Dendritic cell treated with granulocyte-macrophage colony-stimulating factor and Interleukin-4, amounts not matched to agents 40 ng/mL and 50 ng/mL, for 4 days (primary cell): ENCODE measurements at regions of chr12 and their contacts with region 1.

Region 1: GRCh38 chr12:55073043-55074022 is 52.9 kb upstream of the OR9K2 start:
- H3K4me3 Mint-ChIP-seq: no peak overlapping the region
- H3K27ac Mint-ChIP-seq: no peak overlapping the region
- H3K4me1 Mint-ChIP-seq: no peaks in the 10 kb centered on the region
- H3K27me3 Mint-ChIP-seq: peaks cover 9% of the 10 kb centered on the region

Region 2: GRCh38 chr12:54701940-54702592 is 371.3 kb before region 1 on chr12:
- intact Hi-C with region 1: loop called (anchors 2 kb)
- H3K4me3 Mint-ChIP-seq: no peak overlapping the region
- H3K27ac Mint-ChIP-seq: no peak overlapping the region
- H3K4me1 Mint-ChIP-seq: peaks cover 13% of the 10 kb centered on the region
- H3K27me3 Mint-ChIP-seq: peaks cover 2% of the 10 kb centered on the region

Region 3: DNA sequence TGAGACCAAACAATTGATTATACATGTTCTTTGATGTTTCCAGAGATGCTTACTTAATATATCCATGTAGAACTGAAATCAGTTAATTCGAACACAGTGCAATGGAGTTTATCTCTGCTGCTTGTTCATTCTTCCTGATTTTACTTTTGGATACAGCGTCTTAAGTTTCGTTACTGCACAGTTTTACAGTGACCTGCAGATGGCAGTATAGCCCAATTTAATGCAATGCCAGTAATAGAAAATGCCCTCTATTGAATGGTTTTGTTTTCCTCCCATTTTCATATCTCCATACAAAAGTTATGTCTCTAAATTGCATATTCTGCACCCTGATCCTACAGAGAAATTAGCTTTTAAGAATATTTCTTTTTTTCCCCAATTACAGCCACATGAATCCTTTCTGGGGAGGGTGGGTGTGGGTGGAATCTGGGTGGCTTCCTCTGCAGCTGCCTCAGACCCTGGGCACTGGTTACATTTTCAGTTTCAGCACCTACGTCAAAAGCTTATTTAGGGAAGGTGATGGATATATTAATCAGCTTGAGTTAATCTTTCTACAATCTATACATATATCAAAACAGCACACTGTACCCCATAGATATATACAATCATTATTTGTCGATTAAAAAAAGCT is 324.0 kb before region 1 on chr12:
- intact Hi-C with region 1: loop called (anchors 2 kb)
- H3K4me3 Mint-ChIP-seq: no peak overlapping the region
- H3K27ac Mint-ChIP-seq: no peak overlapping the region
- H3K4me1 Mint-ChIP-seq: peaks cover 9% of the 10 kb centered on the region
- H3K27me3 Mint-ChIP-seq: no peaks in the 10 kb centered on the region

Region 4: DNA sequence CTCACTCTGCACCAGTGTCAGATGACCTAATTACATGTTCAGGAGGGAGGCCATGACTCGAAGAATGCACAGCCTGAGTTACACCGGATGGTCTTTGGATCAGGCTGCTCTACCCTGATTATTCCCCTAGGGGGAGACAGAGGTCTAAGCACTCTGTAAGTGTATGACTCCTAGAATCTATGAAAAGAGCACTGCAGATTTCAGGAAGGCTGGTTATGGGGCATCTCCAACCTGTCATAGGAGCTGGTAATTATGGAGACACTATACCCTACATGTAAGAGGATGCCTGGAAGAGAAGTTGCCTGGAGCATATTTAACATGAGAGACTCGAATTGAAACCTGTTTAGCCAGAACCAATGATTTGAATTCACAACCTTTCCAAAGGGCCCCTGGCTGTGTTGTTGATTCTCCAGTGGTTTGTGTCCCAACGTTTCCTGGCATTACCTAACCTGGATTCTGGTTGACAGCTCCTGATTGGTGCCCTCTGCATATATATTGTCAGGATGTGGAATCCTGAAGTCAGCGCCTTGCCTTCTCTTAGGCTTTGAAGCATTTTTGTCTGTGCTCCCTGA is 219.3 kb before region 1 on chr12 and contains the start of gene MUCL1:
- intact Hi-C with region 1: loop called (anchors 5 kb)
- H3K4me3 Mint-ChIP-seq: no peak within 1 kb of the TSS
- H3K27ac Mint-ChIP-seq: no peak within 1 kb of the TSS
- H3K4me1 Mint-ChIP-seq: peaks cover 15% of the 10 kb centered on the region
- H3K27me3 Mint-ChIP-seq: no peaks in the 10 kb centered on the region

Region 5: DNA sequence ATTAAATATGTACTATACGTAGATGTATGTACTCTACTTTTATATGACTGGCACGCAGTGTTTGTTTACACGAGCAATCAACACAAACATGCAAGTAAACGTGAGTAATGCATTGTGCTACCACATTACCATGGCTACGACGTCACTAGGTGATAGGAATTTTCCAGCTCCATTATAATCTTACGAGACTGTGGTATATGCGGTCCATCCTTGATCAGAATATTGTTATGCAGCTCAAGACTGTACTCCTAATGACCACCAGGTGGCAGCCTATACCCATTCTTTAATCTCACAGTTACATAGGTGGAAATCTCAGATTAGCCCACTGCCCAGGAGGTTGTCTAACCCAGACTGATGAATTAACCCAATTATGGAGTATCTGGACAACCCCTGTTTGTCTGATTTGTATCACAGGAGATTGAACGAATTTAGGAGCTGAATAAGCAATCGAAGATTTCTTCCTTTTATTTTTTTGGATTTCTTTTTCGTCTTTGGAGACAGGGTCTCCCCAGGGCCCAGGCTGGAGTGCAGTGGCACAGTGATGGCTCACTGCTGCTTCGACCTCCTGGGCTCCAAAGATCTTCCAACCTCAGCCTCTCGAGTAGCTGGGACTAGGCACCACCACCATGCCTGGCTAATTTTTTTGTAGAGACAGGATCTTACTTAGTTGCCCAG is 80.0 kb before region 1 on chr12:
- intact Hi-C with region 1: loop called (anchors 1 kb)
- H3K4me3 Mint-ChIP-seq: no peak overlapping the region
- H3K27ac Mint-ChIP-seq: no peak overlapping the region
- H3K4me1 Mint-ChIP-seq: peaks cover 12% of the 10 kb centered on the region
- H3K27me3 Mint-ChIP-seq: peaks cover 17% of the 10 kb centered on the region